K562 (cell line): ENCODE measurements at regions of chr6 and their contacts with region 1.

Region 1: GRCh38 chr6:158909933-158910332 is 90.1 kb downstream of the RSPH3 start:
- DNase-seq: no peak
- ATAC-seq: no peak
- H3K4me3 ChIP-seq: no peak overlapping the region
- H3K27ac ChIP-seq: no peak overlapping the region
- H3K4me1 ChIP-seq: no peaks in the 10 kb centered on the region; a peak in 1 of 5 replicates
- H3K27me3 ChIP-seq: no peaks in the 10 kb centered on the region
- CTCF ChIP-seq: no peak
- EP300 ChIP-seq: no peak
- POLR2A ChIP-seq: no peak
- RAD21 ChIP-seq: no peak

Region 2: GRCh38 chr6:158660333-158660754 is 249.6 kb before region 1 on chr6:
- CTCF ChIA-PET with region 1: no interaction called
- POLR2A ChIA-PET with region 1: no interaction called
- in situ Hi-C with region 1: no loop called
- intact Hi-C with region 1: no loop called
- DNase-seq: peak; percentile 60 to 71 (median 66)
- ATAC-seq: peak; percentile 91
- H3K4me3 ChIP-seq: no peak overlapping the region
- H3K27ac ChIP-seq: no peak overlapping the region
- H3K4me1 ChIP-seq: peaks cover 0 to 2% of the 10 kb centered on the region in 2 experiments; a peak in 1 of 5 replicates
- H3K27me3 ChIP-seq: peaks cover 54 to 62% of the 10 kb centered on the region in 2 experiments
- CTCF ChIP-seq: peak; percentile 76 to 84 (median 83)
- EP300 ChIP-seq: no peak
- POLR2A ChIP-seq: no peak
- RAD21 ChIP-seq: peak; percentile 40 to 72; a peak in 3 of 4 replicates

Region 3: DNA sequence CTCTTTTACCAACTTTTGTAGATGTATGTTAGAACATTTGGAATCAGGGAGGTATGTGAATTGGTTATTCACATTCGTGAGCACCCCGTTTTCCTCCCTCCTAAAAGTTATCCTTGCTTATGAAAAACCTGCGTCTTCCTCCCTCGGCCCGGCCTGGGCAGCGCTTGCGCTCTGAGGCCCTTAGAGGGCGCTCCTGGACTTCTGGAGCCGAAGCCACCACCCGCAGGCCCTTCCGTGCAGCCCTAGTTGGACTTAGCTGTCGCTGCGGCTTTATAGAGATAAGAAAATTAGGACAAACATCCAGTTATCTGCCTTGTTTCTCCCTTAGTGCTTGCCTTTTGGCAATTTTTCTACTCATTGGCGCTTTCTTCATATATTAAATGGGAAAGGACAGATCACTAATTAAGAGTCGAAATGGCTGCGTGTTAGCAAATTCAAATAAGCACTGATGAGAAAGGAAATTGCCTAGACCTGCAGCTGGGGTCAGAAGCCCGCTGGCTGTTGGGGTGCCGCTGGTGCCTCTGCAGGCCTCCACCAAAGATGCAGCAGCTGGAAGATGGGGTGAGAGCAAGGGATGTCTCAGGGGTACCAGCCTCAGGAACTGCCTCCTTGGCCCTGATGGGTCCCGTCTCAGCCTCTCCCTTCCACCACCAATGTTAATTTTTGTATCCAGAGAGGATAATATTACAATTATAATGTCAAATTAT is 264.5 kb after region 1 on chr6:
- CTCF ChIA-PET with region 1: no interaction called
- POLR2A ChIA-PET with region 1: no interaction called
- in situ Hi-C with region 1: no loop called
- intact Hi-C with region 1: no loop called
- DNase-seq: peak; percentile 70 to 82 (median 78)
- ATAC-seq: peak; percentile 100
- H3K4me3 ChIP-seq: no peak overlapping the region
- H3K27ac ChIP-seq: no peak overlapping the region
- H3K4me1 ChIP-seq: peaks cover 0 to 7% of the 10 kb centered on the region in 2 experiments; a peak in 1 of 5 replicates
- H3K27me3 ChIP-seq: peaks cover 29 to 54% of the 10 kb centered on the region in 2 experiments
- CTCF ChIP-seq: peak; percentile 95 to 99 (median 98)
- EP300 ChIP-seq: 0 out of 2 replicates have a peak, but pooled peaks have one; percentile 20
- POLR2A ChIP-seq: no peak
- RAD21 ChIP-seq: peak; percentile 91 to 96

Region 4: GRCh38 chr6:160005861-160006540 is 1096.1 kb after region 1 on chr6:
- CTCF ChIA-PET with region 1: no interaction called
- POLR2A ChIA-PET with region 1: no interaction called
- in situ Hi-C with region 1: no loop called
- intact Hi-C with region 1: loop called (anchors 10 kb)
- DNase-seq: peak in 1 of 4 experiments; percentile 23
- ATAC-seq: peak; percentile 41
- H3K4me3 ChIP-seq: no peak overlapping the region
- H3K27ac ChIP-seq: no peak overlapping the region
- H3K4me1 ChIP-seq: peaks cover 0 to 13% of the 10 kb centered on the region in 2 experiments; a peak in 3 of 5 replicates
- H3K27me3 ChIP-seq: no peaks in the 10 kb centered on the region
- CTCF ChIP-seq: no peak
- EP300 ChIP-seq: no peak
- POLR2A ChIP-seq: no peak
- RAD21 ChIP-seq: no peak